ENCODE measurements at regions of chr17 and their contacts with region 1.

Region 1: DNA sequence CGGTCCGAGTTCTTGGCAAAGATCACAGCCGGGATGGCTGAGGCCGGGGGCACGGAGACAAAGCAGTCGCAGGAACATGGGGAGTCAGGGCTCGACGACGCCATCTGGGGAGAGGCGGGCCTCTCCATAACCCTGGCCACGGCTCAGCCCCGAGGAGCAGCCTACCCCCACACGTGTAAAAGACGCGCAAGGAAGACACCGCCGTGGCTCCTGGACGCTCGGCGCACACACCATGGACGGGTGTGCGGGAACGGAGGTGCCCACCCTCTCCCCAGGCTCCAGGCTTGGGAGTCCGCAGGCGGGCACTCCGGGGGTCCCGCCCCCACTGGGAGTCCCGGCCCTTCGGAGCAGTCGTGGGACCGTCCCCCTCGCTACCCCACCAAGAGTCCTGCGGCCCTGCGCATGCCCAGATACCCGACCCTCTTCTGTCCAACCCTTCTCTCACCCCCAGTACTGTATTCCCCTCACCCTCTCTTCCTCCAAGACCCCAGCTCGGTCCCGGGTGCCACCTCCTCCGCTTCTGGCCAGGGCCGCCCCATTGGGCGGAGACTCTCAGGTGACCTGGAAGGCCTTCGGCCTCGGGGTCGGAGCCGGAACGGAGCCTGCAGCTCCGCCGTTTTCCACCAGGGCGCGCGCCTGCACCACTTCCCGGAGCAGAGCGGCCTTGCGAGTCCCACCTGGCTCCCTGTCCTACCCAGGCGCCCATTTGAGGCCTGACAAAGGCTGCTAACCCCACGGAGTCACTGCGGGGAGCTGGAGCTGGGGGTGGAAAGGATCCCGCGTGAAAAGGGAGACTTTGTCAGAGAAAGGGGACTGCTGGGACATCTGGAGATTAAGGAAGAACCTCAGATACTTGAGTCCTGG is at the start of gene SCRN2:
- DNase-seq: peak; percentile 96
- ATAC-seq: peak; percentile 96
- total RNA-seq, gene SCRN2: 24.2 TPM

Region 2: GRCh38 chr17:47763913-47764582 is 76.9 kb before region 1 on chr17:
- intact Hi-C with region 1: no loop called
- DNase-seq: no peak
- ATAC-seq: no peak

Region 3: DNA sequence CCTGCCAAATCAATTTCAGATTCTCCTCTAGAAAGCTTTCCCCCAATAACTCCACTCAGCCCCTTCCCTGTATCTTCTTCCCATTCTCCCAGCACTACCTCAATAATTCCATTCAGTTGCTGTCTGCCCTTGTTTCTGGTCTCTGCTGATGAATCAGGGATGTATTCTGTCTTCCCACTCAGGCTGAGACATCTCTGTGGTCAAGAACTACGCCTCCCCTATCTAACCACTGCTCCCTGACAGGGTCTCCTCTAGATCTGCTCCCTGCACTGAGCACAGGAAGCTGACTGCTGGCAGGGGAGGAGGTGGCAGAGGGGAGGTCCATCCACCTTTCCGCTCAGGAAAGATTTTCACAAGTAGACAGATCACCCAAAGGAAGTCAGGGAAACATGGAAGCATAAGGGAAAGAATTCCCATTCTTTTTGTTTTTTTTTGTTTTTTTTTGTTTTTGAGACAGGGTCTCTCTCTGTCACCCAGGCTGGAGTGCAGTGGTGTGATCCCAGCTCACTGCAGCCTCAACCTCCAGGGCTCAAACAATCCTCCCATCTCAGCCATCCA is 38.1 kb after region 1 on chr17:
- intact Hi-C with region 1: no loop called
- DNase-seq: no peak
- ATAC-seq: no peak

Region 4: DNA sequence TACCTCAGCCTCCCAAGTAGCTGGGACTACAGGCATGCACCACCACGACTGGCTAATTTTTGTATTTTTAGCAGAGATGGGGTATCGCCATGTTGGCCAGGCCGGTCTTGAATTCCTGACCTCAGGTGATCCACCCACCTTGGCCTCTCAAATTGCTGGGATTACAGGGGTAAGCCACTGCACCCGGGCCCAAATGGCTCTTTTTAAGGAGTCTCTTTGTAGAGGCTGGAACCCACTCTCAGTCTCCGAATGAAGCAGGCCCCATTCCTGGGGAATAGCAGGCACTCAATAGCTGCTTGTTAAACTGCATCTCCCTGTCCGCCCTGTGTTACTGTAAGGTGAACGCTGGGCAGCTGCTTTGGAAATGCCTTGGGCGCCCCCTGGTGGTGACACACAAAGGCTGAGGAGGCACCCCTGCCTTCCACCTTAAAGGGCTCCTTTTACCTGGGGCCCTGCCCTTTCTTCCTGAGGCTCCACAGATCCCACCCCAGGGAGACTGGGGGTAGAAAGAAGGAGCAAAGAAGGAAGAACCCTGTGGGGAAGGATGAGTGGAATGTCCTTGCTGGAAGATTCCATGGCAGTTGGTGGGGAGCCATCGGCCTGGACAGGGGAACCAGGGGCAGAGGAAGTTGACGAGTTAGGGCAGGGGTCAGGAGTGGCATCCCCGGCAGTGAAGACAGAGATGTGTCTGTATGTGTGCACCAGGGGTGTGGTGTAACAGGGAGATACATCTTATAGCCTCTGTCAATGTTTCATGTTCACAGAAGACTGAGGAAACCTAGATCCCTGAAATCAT is 49.0 kb after region 1 on chr17:
- intact Hi-C with region 1: loop called (anchors 2 kb)
- DNase-seq: peak; percentile 93
- ATAC-seq: peak; percentile 94

Region 5: GRCh38 chr17:47949136-47949759 is 108.3 kb after region 1 on chr17:
- intact Hi-C with region 1: loop called (anchors 5 kb)
- DNase-seq: peak; percentile 94
- ATAC-seq: peak; percentile 89

Region 6: DNA sequence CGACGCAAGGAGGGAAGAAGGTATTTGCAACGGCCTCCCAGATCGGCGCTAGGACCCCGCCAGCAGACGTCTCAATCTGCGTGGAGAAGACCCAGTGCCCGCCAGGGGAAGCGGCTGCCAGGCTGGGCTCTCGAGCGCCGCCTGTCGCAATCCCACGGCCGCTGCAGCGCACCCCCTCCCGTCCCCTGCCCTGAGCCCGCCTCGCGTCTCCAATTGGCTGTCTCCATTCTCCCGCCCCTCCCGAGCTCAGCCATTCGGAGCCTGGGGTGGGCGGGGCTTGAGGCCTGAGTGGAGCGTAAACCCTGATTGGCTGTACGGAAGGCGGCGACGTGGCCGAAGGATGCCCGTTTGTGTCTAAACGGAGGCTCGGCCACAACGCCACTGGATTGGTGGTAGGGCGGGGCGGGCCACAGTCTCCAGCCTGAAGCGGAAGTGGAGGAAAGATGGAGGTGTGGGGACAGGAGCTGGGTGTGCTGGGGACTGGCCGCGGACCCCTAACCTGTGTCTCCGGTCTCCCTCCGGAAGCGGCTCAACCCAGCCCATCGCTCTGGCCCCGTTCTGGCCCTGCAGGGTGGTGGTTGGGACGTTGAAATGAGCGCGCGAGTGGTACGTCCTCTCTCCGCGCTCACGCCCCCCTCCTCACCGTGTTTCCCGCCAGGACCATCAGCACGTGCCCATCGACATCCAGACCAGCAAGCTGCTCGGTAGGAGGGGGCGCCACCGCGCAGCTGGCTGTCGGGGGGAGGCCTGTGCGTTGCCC is 129.9 kb after region 1 on chr17 and contains the start of gene CDK5RAP3:
- intact Hi-C with region 1: loop called (anchors 5 kb)
- DNase-seq: peak; percentile 100
- ATAC-seq: peak; percentile 99
- total RNA-seq, gene CDK5RAP3: 50.3 TPM

Region 7: GRCh38 chr17:47990962-47991731 is 150.2 kb after region 1 on chr17:
- intact Hi-C with region 1: no loop called
- DNase-seq: no peak
- ATAC-seq: no peak